GM18951 (cell line): ENCODE measurements at regions of chr13 and their contacts with region 1.

Region 1: DNA sequence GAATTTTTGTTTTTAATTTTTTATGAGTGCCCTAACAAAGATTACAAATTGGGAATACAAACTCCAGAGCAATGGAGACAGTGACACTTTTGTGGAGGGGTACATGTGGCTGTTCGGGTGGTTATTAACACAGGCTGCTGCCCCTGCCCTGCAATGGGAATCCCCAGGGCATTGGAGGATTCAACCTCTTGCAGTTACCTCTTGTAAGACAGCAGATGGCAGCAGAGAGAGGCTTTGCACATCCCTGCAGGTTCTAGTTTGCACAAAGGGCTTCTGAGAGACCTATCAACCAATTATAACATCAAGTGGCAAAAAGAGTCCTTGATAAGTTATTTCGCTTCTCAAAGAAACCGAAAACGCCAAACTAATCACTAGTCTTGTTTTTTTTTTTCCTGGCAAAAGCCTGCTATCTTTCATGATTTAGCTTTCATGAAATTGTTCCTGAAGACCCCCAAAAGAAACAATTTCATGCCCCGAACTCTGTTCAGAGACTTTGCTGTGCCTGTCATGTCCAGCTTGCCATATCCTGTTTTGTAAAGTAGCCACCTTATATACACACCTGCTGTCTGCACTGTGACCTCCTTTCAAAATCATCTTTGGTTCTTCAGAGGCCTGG is 10.4 kb downstream of the GJB2 start:
- POLR2A ChIP-seq: no peak

Region 2: DNA sequence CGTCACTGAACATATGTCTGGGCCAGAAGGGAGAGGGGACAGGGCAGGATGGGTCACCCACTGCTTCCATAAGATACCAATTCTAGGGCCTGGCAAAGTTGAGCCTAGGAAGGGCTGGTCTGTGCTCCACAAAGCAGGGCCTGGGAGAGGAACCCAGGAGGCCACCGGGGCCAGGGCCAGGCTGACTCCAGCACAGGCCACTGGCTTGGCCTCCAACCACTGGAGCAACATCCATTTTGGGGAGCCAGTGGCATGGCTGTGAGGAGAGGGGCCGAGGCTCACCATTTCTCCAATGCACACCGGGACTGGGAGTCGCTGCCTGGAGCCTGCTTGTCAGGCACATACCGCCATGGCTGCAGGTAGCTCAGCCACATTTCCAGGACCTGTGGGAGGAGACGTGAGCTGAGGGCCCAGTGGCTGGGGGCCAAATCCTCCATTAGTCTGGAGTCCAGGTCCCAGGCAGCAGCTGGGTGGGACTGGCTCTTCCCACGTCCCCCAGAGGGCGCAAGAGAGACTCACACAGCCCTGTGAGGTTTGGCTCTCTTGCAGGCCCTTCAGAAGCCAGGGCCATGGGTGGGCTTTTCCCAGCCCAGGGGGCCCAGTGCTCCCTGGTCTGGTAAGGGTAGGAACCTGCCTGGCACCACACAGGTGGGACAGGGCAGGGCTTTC is 1028.4 kb before region 1 on chr13:
- in situ Hi-C with region 1: no loop called
- POLR2A ChIP-seq: no peak

Region 3: DNA sequence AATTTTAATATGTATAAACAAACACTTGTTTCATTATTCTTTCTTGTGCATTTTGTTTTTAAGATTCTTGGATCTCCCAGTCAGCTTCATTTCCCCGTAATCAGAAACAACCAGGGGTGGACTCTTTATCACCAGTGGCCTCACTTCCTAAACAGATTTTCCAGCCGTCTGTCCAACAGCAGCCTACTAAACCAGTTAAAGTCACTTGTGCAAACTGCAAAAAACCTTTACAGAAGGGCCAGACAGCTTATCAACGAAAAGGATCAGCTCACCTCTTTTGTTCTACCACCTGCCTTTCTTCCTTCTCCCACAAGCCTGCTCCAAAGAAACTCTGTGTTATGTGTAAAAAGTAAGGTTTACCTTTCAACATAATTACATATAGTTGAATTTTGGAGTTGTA is 179.6 kb before region 1 on chr13:
- in situ Hi-C with region 1: no loop called
- POLR2A ChIP-seq: no peak

Region 4: DNA sequence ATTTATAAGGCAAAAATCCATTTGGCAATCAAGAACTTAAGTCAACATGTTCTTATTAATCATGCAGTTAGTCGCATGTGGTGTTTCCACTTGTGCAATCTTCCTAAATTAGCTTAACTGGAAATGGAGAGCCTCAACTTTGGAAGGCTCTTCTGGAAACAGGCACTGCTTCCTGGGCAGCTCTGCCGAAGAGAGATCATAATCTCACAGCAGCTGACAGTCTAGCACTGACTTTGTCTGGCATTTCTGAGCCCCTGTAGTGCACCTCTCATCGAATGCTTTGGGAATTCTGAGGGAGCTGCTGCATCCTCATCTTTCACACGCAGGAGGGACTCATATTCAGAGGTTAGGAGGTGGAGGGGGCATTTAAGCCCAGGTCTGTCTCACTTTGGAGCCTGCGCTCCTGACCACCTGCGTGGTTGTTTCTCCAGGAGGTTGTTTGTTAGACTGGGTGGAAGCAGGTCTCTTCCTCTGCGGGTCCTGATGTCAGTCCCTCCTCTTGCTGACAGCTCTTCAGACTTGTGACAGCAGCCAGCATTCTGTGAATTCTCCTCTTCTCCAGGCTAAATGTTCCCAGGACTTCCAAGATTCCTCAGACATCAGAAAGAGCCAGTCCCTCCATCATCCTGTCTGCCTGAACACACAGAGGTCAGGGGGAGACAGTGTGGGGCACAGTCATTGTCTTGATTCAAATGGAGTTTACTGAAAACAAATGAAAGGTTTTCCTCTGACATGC is 150.2 kb after region 1 on chr13:
- in situ Hi-C with region 1: no loop called
- POLR2A ChIP-seq: no peak

Region 5: GRCh38 chr13:20495082-20496023 is 313.0 kb after region 1 on chr13:
- in situ Hi-C with region 1: no loop called
- POLR2A ChIP-seq: no peak

Region 6: DNA sequence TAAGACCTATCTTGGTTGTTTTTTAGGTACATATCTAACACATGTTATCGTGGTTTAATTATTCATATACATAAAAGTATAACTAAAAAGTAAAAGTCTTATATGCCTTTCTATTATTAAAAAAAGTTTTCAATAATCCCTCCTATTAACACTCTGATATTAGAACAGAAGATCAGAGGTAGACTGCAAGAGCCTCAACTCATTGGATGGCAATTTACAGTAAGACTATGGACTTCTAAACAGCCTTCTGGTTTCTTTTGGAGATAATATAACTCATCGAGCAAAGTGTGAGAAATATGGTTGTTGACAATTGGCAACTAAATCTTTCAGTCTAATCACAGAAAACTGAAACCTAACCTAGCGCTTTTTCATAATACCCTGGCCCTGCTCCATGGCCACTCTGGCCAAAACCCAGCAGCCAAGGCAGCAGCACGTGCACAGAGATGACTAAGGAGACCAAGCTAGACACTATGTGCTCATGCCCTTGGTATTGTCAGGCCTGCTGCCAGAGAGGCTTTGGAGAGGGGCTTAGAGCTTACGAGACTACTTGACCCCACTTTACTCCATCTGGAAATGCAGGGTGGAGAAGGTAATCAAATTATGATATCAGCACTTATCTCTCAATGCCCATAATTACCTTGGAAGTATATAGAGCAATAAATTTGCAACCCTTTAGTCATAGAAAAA is 632.0 kb after region 1 on chr13:
- in situ Hi-C with region 1: loop called (anchors 25 kb)
- POLR2A ChIP-seq: no peak